GM10248 (cell line): ENCODE measurements at regions of chr12 and their contacts with region 1.

Region 1: DNA sequence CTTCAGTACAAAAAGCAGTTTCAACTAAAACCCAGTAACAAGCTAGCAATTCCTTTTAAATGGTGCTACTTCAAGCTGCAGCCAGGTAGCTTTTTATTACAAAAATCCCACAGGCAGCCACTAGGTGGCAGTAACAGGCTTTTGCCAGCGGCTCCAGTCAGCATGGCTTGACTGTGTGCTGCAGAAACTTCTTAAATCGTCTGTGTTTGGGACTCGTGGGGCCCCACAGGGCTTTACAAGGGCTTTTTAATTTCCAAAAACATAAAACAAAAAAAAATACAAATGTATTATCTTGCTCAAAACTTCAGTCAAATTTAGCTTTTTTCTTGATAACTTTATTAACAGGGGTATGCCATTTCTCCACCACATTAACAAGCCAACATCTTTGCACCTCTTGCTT is 3.6 kb upstream of the CLEC4E start:
- DNase-seq: peak; percentile 70
- CTCF ChIP-seq: peak; percentile 82

Region 2: GRCh38 chr12:8527250-8528130 is 16.8 kb before region 1 on chr12:
- CTCF ChIA-PET with region 1: interaction called, 22 read pairs
- POLR2A ChIA-PET with region 1: no interaction called
- DNase-seq: no peak
- CTCF ChIP-seq: no peak

Region 3: GRCh38 chr12:8572507-8572906 is 28.2 kb after region 1 on chr12:
- CTCF ChIA-PET with region 1: interaction called, 29 read pairs
- POLR2A ChIA-PET with region 1: no interaction called
- DNase-seq: no peak
- CTCF ChIP-seq: no peak

Region 4: GRCh38 chr12:8629486-8630033 is 85.3 kb after region 1 on chr12:
- CTCF ChIA-PET with region 1: interaction called, 21 read pairs
- POLR2A ChIA-PET with region 1: no interaction called
- DNase-seq: peak; percentile 68
- CTCF ChIP-seq: no peak

Region 5: GRCh38 chr12:8668441-8668840 is 124.1 kb after region 1 on chr12:
- CTCF ChIA-PET with region 1: interaction called, 10 read pairs
- POLR2A ChIA-PET with region 1: no interaction called
- DNase-seq: no peak
- CTCF ChIP-seq: no peak

Region 6: GRCh38 chr12:8890313-8891085 is 346.2 kb after region 1 on chr12:
- CTCF ChIA-PET with region 1: interaction called, 20 read pairs
- POLR2A ChIA-PET with region 1: no interaction called
- DNase-seq: peak; percentile 73
- CTCF ChIP-seq: peak; percentile 85